Activated CD8-positive, alpha-beta T cell treated with anti-CD3 and anti-CD28 coated beads, Interleukin-2, amount 10 ng/mL, durations not matched to agents 7 days and 5 days (primary cell): ENCODE measurements at regions of chr14 and their contacts with region 1.

Region 1: GRCh38 chr14:75088574-75089373 is 19.3 kb downstream of the ZC2HC1C start:
- DNase-seq: peak; percentile 65
- ATAC-seq: peak; percentile 69
- H3K4me3 Mint-ChIP-seq: no peak overlapping the region
- H3K27ac Mint-ChIP-seq: no peak overlapping the region
- H3K4me1 Mint-ChIP-seq: no peaks in the 10 kb centered on the region
- H3K27me3 Mint-ChIP-seq: no peaks in the 10 kb centered on the region

Region 2: GRCh38 chr14:74905375-74906142 is 183.2 kb before region 1 on chr14:
- CTCF ChIA-PET with region 1: interaction called, 22 read pairs
- POLR2A ChIA-PET with region 1: interaction called, 3 read pairs
- DNase-seq: peak; percentile 81
- ATAC-seq: peak; percentile 65
- H3K4me3 Mint-ChIP-seq: no peak overlapping the region
- H3K27ac Mint-ChIP-seq: peak overlapping the region; percentile 50
- H3K4me1 Mint-ChIP-seq: peaks cover 12% of the 10 kb centered on the region
- H3K27me3 Mint-ChIP-seq: no peaks in the 10 kb centered on the region

Region 3: DNA sequence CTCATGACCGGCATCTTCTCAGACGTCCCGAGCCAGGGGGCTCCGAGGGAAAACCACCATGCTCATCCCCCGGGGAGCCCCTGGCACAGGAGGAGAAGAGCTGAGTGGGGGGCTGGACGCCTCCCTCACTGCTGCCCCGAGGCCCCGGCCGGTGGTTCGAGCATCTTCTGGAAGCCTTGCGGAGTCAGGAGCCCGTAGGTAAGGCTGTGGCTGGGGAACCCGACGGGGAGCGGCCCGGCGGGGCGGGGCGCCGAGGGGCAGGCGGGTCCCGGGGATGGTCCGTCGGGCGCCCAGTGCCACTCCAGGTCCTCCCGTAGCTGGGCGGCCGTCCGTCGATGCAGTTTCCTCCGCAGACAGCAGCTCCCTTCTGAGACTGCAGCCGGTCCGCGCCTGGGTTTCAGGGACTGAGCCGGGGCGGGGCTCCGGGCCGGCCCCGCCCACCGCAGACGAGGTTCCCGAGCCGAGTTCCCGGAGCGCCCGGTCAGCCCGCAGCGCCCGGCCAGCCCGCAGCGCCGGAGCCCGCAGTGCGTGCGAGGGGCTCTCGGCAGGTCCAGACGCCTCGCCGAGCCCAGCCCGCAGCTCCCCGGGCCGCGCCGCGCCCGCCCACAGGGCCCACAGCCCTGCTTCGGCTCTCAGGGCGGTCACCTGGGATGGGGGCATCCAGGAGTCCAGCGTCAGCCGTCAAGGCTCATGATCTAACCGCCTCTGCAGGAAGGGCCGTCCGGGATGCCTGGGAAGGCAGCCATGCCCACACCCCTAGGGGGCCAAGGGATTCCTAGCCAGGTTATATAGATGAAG is 133.3 kb before region 1 on chr14 and contains the start of gene PGF:
- CTCF ChIA-PET with region 1: interaction called, 11 read pairs
- POLR2A ChIA-PET with region 1: no interaction called
- DNase-seq: peak; percentile 40
- ATAC-seq: peak; percentile 76
- H3K4me3 Mint-ChIP-seq: peak within 1 kb of the TSS; percentile 38
- H3K27ac Mint-ChIP-seq: no peak within 1 kb of the TSS
- H3K4me1 Mint-ChIP-seq: peaks cover 8% of the 10 kb centered on the region
- H3K27me3 Mint-ChIP-seq: peaks cover 12% of the 10 kb centered on the region
- total RNA-seq, gene PGF: 0.21 TPM in 1 of 2 experiments, not detected in the other

Region 4: DNA sequence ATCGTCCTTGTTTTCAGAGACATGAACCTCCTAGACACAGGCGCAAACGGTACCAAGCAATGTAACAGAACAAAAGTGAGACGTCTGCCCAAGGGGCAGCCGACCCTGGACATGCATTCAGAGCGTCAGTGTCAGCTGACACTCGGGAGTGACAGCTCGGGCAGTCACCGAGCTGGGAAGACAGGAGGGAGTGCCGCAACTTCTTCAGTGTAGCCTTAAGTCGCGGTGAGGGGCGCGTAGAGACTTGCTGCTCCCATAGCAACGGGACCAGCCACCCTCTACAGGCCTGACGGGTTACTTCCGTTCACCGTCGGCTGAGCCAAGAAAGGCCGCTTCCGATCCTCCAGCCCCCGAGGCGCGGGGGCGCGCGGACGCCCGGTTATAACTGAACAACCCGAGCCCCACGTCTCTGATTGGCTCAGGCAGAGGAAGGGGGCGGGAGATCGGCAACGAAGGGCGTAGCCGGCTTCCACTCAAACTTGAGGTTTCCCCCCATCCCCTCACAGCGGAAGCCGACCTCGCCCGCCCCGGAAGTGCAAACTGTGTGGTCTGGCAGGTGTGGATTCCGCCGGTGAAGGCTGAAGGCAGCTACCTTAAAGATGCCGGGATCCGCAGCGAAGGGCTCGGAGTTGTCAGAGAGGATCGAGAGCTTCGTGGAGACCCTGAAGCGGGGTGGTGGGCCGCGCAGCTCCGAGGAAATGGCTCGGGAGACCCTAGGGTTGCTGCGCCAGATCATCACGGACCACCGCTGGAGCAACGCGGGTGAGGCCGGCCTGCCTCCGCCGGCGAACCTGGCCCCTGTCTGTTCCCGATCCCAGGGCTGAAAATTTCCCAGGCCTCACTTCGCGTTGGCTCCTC is 86.2 kb before region 1 on chr14 and contains the start of gene EIF2B2:
- CTCF ChIA-PET with region 1: interaction called, 16 read pairs
- POLR2A ChIA-PET with region 1: no interaction called
- DNase-seq: peak; percentile 100
- ATAC-seq: peak; percentile 98
- H3K4me3 Mint-ChIP-seq: peak within 1 kb of the TSS; percentile 91
- H3K27ac Mint-ChIP-seq: peak within 1 kb of the TSS; percentile 94
- H3K4me1 Mint-ChIP-seq: peaks cover 35% of the 10 kb centered on the region
- H3K27me3 Mint-ChIP-seq: no peaks in the 10 kb centered on the region
- total RNA-seq, gene EIF2B2: 49.1 to 51.0 TPM

Region 5: DNA sequence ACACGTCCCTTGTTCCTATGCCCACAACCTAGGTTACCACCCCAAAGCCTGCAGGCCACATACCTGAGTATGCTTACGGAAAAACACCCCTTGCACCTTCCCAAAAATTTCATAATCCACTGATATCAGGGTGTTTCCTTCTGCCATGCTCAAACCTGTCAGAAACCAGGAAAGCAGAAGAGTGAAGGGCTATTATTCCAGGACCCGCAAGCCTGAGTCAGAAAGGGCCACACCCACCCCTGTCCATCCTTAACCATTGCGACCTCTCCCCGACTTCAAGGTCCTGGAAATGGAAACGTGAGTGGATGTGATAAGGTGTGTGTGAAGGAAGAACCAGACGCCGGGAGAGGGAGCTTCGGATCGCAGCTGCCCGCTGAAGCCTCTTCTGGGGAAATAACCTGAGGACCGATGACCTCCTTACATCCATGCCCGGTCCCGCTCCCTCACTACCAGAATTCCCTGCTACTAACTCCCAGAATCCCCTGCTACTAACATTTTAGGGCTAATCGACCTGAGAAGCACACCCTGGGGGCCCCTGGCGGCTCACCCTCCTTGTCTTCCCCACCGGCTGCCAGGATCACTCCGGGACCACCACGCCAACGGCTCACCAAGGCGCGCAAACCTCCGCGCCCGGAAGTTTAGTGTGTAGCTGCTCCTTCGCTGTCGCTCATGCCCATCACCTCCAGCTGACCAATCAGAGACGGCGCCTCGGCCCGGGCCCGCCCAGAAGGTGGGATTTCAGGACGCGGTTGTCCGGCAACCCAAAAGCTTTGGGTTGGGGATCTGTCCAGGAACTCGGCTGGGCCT is 25.2 kb before region 1 on chr14 and contains the start of gene ACYP1:
- CTCF ChIA-PET with region 1: interaction called, 22 read pairs
- POLR2A ChIA-PET with region 1: no interaction called
- DNase-seq: peak; percentile 94
- ATAC-seq: peak; percentile 100
- H3K4me3 Mint-ChIP-seq: peak within 1 kb of the TSS; percentile 100
- H3K27ac Mint-ChIP-seq: peak within 1 kb of the TSS; percentile 99
- H3K4me1 Mint-ChIP-seq: peaks cover 38% of the 10 kb centered on the region
- H3K27me3 Mint-ChIP-seq: no peaks in the 10 kb centered on the region
- total RNA-seq, gene ACYP1: 42.6 to 44.0 TPM

Region 6: GRCh38 chr14:75450381-75451276 is 361.9 kb after region 1 on chr14:
- CTCF ChIA-PET with region 1: no interaction called
- POLR2A ChIA-PET with region 1: no interaction called
- DNase-seq: no peak
- ATAC-seq: no peak
- H3K4me3 Mint-ChIP-seq: no peak overlapping the region
- H3K27ac Mint-ChIP-seq: peak overlapping the region; percentile 9
- H3K4me1 Mint-ChIP-seq: peaks cover 13% of the 10 kb centered on the region
- H3K27me3 Mint-ChIP-seq: peaks cover 10% of the 10 kb centered on the region